ENCODE measurements at regions of chr6 and their contacts with region 1.

Region 1: DNA sequence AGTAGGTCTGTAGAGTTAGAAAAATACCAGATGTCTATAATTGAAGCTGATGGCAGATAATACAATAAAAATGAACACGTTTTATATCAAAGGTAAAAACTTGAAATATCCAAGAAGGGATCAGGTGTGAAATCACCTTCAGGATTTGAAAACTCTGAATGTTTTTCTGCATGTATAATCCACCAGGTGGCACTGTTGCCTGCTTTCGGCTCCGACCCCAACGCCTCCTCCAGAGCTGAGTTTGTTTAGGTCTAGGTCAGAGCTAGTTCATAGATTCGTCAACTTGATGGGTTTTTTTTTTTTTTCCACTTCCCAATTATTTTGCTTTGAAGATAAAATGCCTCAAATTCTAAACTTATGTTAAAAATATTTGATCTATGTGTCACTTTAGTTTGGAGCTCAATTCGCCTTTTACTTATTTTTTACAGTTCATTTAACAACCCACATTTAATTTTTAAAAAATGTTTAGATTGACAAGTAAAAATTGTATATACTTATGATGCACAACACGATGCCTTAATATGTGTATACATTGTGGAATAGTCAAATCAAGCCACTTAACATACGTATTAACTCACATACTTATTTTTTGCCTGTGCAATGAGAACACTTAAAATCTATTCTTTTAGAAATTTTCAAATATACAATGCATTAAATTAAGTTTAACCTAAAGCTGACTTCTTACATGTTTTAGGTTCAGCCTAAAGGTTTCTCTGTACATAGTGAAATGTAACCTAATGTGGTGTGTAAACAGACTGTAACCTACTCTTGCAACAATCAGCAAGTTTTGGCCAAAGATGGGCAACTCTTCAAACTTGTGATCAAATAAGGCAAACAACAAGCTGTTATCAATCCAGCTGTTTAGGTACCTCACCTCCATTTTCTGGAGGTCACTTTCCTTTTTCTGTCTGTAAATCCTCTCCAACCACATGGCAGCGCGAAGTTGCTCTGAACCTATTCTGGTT is 39.4 kb upstream of the ENPP4 start:
- DNase-seq: peak; percentile 33 to 80
- ATAC-seq: peak; percentile 65 to 77 (median 72)
- H3K4me3 ChIP-seq: no peak overlapping the region
- H3K4me3 Mint-ChIP-seq: no peak overlapping the region
- H3K27ac ChIP-seq: no peak overlapping the region
- H3K27ac Mint-ChIP-seq: no peak overlapping the region
- H3K4me1 ChIP-seq: peaks cover 2% of the 10 kb centered on the region
- H3K4me1 Mint-ChIP-seq: peaks cover 5 to 16% of the 10 kb centered on the region in 2 donors
- H3K27me3 ChIP-seq: peaks cover 2% of the 10 kb centered on the region
- H3K27me3 Mint-ChIP-seq: peaks cover 6 to 8% of the 10 kb centered on the region in 2 donors
- CTCF ChIP-seq: peak; percentile 96

Region 2: GRCh38 chr6:45812922-45813321 is 277.5 kb before region 1 on chr6:
- intact Hi-C with region 1: no loop called
- DNase-seq: no peak
- ATAC-seq: no peak
- H3K4me3 ChIP-seq: no peak overlapping the region
- H3K4me3 Mint-ChIP-seq: no peak overlapping the region
- H3K27ac ChIP-seq: no peak overlapping the region
- H3K27ac Mint-ChIP-seq: no peak overlapping the region
- H3K4me1 ChIP-seq: no peaks in the 10 kb centered on the region
- H3K4me1 Mint-ChIP-seq: peaks cover 0 to 5% of the 10 kb centered on the region in 2 donors
- H3K27me3 ChIP-seq: no peaks in the 10 kb centered on the region
- H3K27me3 Mint-ChIP-seq: peaks cover 20 to 44% of the 10 kb centered on the region in 2 donors
- CTCF ChIP-seq: no peak

Region 3: GRCh38 chr6:45959534-45960145 is 130.8 kb before region 1 on chr6:
- intact Hi-C with region 1: no loop called
- DNase-seq: no peak
- ATAC-seq: no peak
- H3K4me3 ChIP-seq: no peak overlapping the region
- H3K4me3 Mint-ChIP-seq: no peak overlapping the region
- H3K27ac ChIP-seq: no peak overlapping the region
- H3K27ac Mint-ChIP-seq: no peak overlapping the region
- H3K4me1 ChIP-seq: no peaks in the 10 kb centered on the region
- H3K4me1 Mint-ChIP-seq: no peaks in the 10 kb centered on the region
- H3K27me3 ChIP-seq: peaks cover 4% of the 10 kb centered on the region
- H3K27me3 Mint-ChIP-seq: peaks cover 10 to 16% of the 10 kb centered on the region in 2 donors
- CTCF ChIP-seq: no peak

Region 4: DNA sequence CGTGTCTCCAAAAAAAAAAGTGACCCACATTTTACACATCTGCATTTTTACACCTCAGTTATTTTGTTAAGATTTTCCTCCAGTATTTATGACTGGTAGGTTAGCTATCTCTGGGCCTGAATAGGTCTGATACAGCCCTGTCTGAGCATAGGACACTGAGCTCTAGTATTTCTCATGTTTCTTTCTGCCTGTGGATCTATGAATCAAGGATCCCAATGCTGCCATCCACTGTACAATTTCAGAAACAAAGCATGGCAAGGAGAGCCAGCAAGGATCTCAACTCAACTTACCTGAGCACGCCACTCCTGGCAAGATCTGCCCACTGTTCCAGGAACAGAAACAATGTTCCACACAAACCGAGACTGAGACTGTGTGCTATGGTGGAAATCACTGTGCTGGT is 116.8 kb after region 1 on chr6:
- intact Hi-C with region 1: loop called (anchors 5 kb)
- DNase-seq: no peak
- ATAC-seq: no peak
- H3K4me3 ChIP-seq: no peak overlapping the region
- H3K4me3 Mint-ChIP-seq: no peak overlapping the region
- H3K27ac ChIP-seq: no peak overlapping the region
- H3K27ac Mint-ChIP-seq: no peak overlapping the region
- H3K4me1 ChIP-seq: no peaks in the 10 kb centered on the region
- H3K4me1 Mint-ChIP-seq: no peaks in the 10 kb centered on the region
- H3K27me3 ChIP-seq: no peaks in the 10 kb centered on the region
- H3K27me3 Mint-ChIP-seq: no peaks in the 10 kb centered on the region
- CTCF ChIP-seq: no peak

Region 5: GRCh38 chr6:46221222-46221793 is 130.9 kb after region 1 on chr6:
- intact Hi-C with region 1: loop called (anchors 1 kb)
- DNase-seq: peak in 1 of 2 donors; percentile 49
- ATAC-seq: peak; percentile 69 to 88 (median 73)
- H3K4me3 ChIP-seq: no peak overlapping the region
- H3K4me3 Mint-ChIP-seq: no peak overlapping the region
- H3K27ac ChIP-seq: no peak overlapping the region
- H3K27ac Mint-ChIP-seq: no peak overlapping the region
- H3K4me1 ChIP-seq: no peaks in the 10 kb centered on the region
- H3K4me1 Mint-ChIP-seq: no peaks in the 10 kb centered on the region
- H3K27me3 ChIP-seq: no peaks in the 10 kb centered on the region
- H3K27me3 Mint-ChIP-seq: no peaks in the 10 kb centered on the region
- CTCF ChIP-seq: peak; percentile 84

Region 6: DNA sequence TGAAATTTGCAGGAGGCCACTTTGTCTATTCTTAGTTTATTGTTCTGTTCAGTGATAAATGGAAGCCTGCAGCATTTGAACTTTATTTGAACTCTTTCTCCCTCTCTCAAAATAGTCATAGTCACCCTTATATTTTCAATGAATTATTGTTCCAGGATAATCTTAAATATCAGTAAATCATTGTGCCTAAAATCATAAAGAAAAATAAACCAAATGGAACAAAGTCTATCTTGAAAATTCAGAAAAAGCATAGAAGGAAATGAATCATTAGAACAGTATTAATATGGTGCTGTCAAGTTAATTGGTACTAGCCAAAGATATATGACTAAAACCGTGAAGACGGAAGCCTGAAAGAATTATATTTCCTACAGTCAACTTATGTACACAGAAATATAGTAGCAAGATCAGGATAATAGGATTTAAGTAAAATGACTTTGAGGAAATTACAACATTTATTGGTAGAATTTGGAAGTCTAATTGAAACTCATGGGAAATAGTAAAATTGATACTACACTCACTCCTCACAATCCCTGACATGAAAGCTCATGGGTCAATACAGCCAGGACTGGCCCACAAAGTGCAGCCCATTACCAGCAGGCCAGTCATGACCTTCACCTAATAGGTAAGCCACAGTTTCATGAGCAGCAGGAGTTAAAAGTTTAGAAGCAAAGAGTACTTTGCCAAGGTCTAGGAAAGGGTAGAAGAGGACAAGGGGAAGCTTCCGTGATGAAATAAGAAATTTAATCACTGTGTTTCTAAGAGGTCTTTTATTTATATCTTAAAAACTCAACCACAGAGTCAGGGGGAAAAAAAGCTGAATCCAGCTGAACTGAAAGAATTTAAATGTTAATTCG is 200.3 kb after region 1 on chr6:
- intact Hi-C with region 1: no loop called
- DNase-seq: no peak
- ATAC-seq: no peak
- H3K4me3 ChIP-seq: no peak overlapping the region
- H3K4me3 Mint-ChIP-seq: no peak overlapping the region
- H3K27ac ChIP-seq: no peak overlapping the region
- H3K27ac Mint-ChIP-seq: no peak overlapping the region
- H3K4me1 ChIP-seq: no peaks in the 10 kb centered on the region
- H3K4me1 Mint-ChIP-seq: no peaks in the 10 kb centered on the region
- H3K27me3 ChIP-seq: peaks cover 3% of the 10 kb centered on the region
- H3K27me3 Mint-ChIP-seq: peaks cover 19 to 26% of the 10 kb centered on the region in 2 donors
- CTCF ChIP-seq: no peak

Region 7: DNA sequence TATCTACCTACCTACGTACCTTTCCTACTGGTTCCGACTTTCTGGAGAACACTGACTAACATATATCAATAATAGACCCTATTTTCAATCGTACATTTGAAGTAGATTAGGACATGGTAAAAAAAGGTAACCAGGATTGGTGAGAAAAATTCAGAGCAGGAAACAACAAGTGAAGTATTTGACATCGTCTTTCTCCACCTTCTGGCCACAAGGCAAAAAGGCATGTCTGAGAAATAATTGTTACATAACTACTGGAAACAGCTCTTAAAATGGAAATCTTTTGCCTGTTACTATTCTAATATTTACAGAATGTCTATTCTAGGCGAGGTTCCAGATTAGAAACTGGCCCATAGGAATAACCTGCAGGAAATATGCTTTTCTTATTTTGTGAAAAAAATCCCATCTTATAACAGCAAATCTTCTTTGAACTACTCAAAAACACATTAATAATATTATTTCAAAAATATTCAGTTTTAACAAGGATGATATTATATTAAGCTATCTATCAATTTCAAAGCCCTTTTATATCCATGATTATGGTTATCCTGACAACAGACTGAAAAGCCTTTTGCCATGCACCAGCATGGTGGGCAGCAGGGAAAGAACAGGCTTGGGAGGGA is 320.0 kb after region 1 on chr6:
- intact Hi-C with region 1: loop called (anchors 1 kb)
- DNase-seq: peak in 1 of 2 donors; percentile 81
- ATAC-seq: peak in 1 of 3 donors; percentile 74
- H3K4me3 ChIP-seq: no peak overlapping the region
- H3K4me3 Mint-ChIP-seq: no peak overlapping the region
- H3K27ac ChIP-seq: no peak overlapping the region
- H3K27ac Mint-ChIP-seq: no peak overlapping the region
- H3K4me1 ChIP-seq: no peaks in the 10 kb centered on the region
- H3K4me1 Mint-ChIP-seq: no peaks in the 10 kb centered on the region
- H3K27me3 ChIP-seq: no peaks in the 10 kb centered on the region
- H3K27me3 Mint-ChIP-seq: peaks cover 0 to 4% of the 10 kb centered on the region in 2 donors
- CTCF ChIP-seq: peak; percentile 59

Region 8: DNA sequence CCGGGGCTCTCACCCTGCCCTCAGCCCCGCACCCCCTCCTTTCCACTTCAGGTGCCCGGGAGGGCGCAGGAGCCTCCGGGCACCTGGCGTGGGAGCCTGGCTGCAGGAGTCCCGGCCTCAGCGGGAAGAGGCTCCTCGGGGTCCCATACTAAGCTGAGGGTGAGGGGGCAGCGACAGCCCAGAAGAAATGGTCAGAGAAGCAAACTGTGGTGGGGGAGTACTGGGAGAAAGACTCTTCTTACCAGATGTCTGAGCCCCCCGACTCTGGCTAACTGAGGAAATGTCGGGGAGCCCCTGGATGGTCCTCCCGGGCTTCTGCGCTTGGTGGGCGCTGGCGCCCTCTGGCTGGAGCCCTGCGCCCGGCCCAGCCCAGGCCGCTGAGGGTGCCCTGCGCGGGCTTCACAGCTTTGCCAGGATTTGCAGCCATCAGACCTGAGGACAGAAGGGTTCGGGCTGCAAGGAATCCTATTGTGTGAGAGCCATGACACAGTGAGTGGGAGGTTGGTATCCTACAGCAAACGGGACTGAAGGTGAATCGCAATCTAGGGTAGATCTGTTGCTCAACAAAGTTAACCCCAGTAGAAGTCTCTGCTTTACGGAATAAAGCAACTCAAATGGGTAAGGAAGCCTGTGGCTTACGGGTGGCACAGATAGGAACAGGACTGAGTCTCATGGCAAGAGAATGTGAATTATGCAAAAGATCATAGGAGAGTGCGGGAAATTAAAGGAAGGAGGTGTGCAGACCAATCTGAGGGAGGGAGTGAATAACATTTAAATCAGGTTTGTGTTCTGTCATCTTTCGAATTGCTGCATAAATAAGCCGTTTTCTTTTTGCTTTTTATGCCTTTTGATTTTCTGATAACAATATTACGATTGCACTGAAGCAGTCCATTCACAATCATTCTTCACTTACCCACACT is 401.5 kb after region 1 on chr6:
- intact Hi-C with region 1: loop called (anchors 1 kb)
- DNase-seq: peak; percentile 11 to 24
- ATAC-seq: peak; percentile 59 to 66 (median 65)
- H3K4me3 ChIP-seq: peak overlapping the region; percentile 46
- H3K4me3 Mint-ChIP-seq: peak overlapping the region; percentile 72
- H3K27ac ChIP-seq: no peak overlapping the region
- H3K27ac Mint-ChIP-seq: no peak overlapping the region
- H3K4me1 ChIP-seq: peaks cover 10% of the 10 kb centered on the region
- H3K4me1 Mint-ChIP-seq: peaks cover 4 to 13% of the 10 kb centered on the region in 2 donors
- H3K27me3 ChIP-seq: peaks cover 35% of the 10 kb centered on the region
- H3K27me3 Mint-ChIP-seq: peaks cover 47 to 75% of the 10 kb centered on the region in 2 donors
- CTCF ChIP-seq: peak; percentile 43

Region 9: GRCh38 chr6:46626228-46626909 is 536.0 kb after region 1 on chr6:
- intact Hi-C with region 1: loop called (anchors 1 kb)
- DNase-seq: peak in 1 of 2 donors; percentile 23
- ATAC-seq: no peak
- H3K4me3 ChIP-seq: no peak overlapping the region
- H3K4me3 Mint-ChIP-seq: no peak overlapping the region
- H3K27ac ChIP-seq: no peak overlapping the region
- H3K27ac Mint-ChIP-seq: no peak overlapping the region
- H3K4me1 ChIP-seq: no peaks in the 10 kb centered on the region
- H3K4me1 Mint-ChIP-seq: no peaks in the 10 kb centered on the region
- H3K27me3 ChIP-seq: no peaks in the 10 kb centered on the region
- H3K27me3 Mint-ChIP-seq: peaks cover 21 to 26% of the 10 kb centered on the region in 2 donors
- CTCF ChIP-seq: peak; percentile 51

Region 10: DNA sequence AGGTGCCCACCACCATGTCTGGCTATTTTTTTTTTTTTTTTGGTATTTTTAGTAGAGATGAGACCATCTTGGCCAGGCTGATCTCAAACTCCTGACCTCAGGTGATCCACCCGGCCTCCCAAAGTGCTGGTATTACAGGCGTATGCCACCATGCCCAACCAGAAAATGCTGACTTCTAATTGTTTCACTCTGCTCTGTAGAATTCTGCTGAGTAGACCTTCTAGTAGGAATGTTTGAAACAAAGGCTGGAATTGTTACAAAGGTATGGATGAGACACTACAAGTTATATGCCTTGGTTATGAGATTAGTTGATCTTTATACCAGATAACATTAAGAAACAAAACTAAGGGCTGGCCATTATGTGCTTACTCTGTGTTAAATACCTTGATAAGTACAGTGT is 747.6 kb after region 1 on chr6:
- intact Hi-C with region 1: no loop called
- DNase-seq: no peak
- ATAC-seq: no peak
- H3K4me3 ChIP-seq: no peak overlapping the region
- H3K4me3 Mint-ChIP-seq: no peak overlapping the region
- H3K27ac ChIP-seq: no peak overlapping the region
- H3K27ac Mint-ChIP-seq: no peak overlapping the region
- H3K4me1 ChIP-seq: no peaks in the 10 kb centered on the region
- H3K4me1 Mint-ChIP-seq: no peaks in the 10 kb centered on the region
- H3K27me3 ChIP-seq: no peaks in the 10 kb centered on the region
- H3K27me3 Mint-ChIP-seq: peaks cover 0 to 7% of the 10 kb centered on the region in 2 donors
- CTCF ChIP-seq: no peak

Measured in natural killer cell (primary cell).